ENCODE measurements at regions of chr11 and their contacts with region 1.

Region 1: GRCh38 chr11:35144136-35144741 is 5.3 kb downstream of the CD44 start:
- DNase-seq: peak; percentile 91
- H3K4me3 Mint-ChIP-seq: peak overlapping the region; percentile 87
- H3K27ac Mint-ChIP-seq: peak overlapping the region; percentile 96
- H3K4me1 Mint-ChIP-seq: peaks cover 71% of the 10 kb centered on the region
- H3K27me3 Mint-ChIP-seq: no peaks in the 10 kb centered on the region

Region 2: GRCh38 chr11:34916015-34916842 is 228.0 kb before region 1 on chr11 and contains the starts of genes APIP and PDHX:
- intact Hi-C with region 1: loop called (anchors 2 kb)
- DNase-seq: peak; percentile 98
- H3K4me3 Mint-ChIP-seq: peak within 1 kb of the TSS; percentile 98
- H3K27ac Mint-ChIP-seq: peak within 1 kb of the TSS; percentile 95
- H3K4me1 Mint-ChIP-seq: peaks cover 25% of the 10 kb centered on the region
- H3K27me3 Mint-ChIP-seq: no peaks in the 10 kb centered on the region
- total RNA-seq, gene APIP: 26.8 and 29.6 TPM in 2 replicates
- total RNA-seq, gene PDHX: 31.0 and 35.7 TPM in 2 replicates

Region 3: DNA sequence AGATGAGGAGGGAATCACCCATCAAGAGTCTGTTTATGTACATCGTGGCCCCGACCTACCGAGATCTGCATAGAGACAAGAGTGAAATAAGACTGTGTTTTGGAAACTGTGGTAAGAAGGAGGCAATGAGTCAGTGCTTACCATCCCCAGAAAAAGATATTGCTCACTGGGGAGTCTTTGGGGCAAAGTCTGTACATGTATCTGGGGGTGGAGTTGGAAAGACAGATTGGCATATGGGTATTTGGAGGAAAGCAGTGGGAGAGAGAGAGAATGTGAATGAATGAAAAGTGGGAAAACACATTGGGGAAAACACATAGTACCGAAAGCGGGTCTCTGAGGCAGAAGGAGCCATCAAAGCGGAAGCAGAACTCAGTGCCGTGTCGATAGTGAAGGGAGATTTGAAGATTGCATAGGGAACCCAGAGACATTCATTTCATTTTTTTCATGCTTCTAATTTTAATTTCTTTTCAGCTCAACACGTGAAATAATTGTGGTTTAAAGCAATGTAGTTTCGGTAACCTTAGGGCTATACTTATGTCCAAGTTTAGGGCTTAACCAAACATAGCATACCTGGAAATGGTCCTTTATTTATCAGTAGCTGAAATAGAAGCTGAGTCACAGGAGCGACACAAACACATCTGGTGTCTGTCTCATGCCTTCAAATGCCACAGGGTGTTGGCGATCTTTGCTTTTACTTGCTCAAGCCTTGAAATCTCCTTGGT is 103.9 kb before region 1 on chr11:
- intact Hi-C with region 1: loop called (anchors 1 kb)
- DNase-seq: peak; percentile 91
- H3K4me3 Mint-ChIP-seq: peak overlapping the region; percentile 77
- H3K27ac Mint-ChIP-seq: peak overlapping the region; percentile 94
- H3K4me1 Mint-ChIP-seq: peaks cover 52% of the 10 kb centered on the region
- H3K27me3 Mint-ChIP-seq: peaks cover 9% of the 10 kb centered on the region

Region 4: DNA sequence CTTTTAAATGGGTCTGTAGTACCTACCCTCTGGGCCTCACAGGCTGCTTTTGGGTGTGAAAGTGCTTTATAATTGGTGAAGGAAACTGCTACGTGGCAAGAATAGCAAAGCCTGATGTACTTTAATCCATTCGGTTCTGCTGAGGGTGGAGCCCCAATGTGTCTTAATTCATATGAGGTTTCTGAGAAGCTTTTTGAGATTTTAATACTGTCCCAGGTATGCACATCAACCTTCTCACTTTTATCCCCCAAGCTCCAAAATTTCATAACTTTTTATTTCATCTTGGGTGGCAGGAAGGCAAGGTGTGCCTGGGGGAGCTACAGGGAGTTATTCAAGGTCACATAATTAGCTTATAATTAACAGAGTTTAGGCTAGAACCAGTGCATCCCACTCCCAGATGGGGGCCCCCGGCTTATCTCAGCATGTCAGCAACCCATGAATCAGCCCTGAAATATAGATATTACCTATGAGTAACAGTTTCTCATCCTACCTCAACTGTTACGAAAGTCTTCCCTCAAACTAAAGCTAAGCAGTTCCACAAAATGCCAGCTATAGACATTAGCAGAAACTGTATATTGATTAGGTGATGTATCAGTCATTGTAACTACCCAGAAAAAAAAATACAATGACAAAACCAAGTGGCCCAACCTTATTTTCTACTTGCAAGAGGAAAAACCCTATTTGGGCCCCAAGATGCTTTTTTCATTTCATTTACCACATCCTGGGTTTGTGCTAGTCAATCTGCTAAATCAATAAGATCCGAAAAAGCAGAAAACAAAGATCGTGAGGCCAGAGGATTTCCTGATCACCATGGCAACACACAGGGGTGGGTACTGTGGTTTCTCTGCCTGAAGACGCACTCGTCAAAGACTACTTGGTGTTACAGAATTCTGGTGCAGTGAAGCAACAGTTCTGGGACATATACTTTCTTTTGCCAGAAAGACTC is 21.5 kb after region 1 on chr11:
- intact Hi-C with region 1: loop called (anchors 1 kb)
- DNase-seq: peak; percentile 98
- H3K4me3 Mint-ChIP-seq: peak overlapping the region; percentile 78
- H3K27ac Mint-ChIP-seq: peak overlapping the region; percentile 99
- H3K4me1 Mint-ChIP-seq: peaks cover 93% of the 10 kb centered on the region
- H3K27me3 Mint-ChIP-seq: no peaks in the 10 kb centered on the region

Region 5: GRCh38 chr11:35272391-35272902 is 128.2 kb after region 1 on chr11:
- intact Hi-C with region 1: loop called (anchors 1 kb)
- DNase-seq: peak; percentile 86
- H3K4me3 Mint-ChIP-seq: peak overlapping the region; percentile 16
- H3K27ac Mint-ChIP-seq: peak overlapping the region; percentile 87
- H3K4me1 Mint-ChIP-seq: peaks cover 60% of the 10 kb centered on the region
- H3K27me3 Mint-ChIP-seq: peaks cover 2% of the 10 kb centered on the region

Region 6: DNA sequence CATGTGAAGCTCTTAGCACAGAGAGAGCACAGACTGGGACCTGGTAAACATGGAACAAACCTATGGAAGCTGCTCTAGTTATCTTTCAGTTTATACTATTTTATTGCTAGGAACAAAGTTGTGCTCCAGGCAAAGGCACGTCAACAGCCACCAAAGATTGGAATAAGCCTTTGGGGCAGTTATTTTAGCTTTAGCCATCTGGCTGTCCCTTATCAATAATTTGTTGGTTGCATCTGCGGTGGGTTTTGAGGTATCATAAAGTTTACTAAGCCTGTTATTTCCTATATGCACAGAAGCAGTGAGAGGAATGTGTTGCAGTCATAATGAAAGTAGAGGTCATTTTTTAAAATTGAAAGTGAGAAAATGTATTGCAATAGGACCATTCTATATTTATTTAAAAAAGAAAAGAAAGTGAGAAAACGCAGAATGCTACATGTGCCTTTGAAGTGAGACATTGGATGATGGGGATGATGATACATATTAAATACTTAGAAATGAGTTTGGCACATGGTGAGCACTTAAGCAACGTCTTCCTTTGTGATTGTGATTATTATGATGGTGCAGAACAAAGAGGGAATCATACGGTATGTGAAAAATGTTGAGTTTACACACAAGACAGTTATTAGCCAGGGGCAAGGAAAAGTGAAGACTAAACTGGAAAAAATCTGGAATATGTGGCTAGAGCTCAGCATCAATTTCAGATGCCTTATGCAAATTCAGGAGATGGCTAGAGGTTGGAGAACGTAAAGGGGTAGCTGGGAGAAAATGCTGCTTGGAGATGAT is 1210.2 kb after region 1 on chr11:
- intact Hi-C with region 1: loop called (anchors 10 kb)
- DNase-seq: peak; percentile 71
- H3K4me3 Mint-ChIP-seq: peak overlapping the region; percentile 48
- H3K27ac Mint-ChIP-seq: peak overlapping the region; percentile 81
- H3K4me1 Mint-ChIP-seq: peaks cover 66% of the 10 kb centered on the region
- H3K27me3 Mint-ChIP-seq: peaks cover 2% of the 10 kb centered on the region